PC-9 (cell line): ENCODE measurements at regions of chr3 and their contacts with region 1.

Region 1: GRCh38 chr3:192130534-192131132 is 596.7 kb downstream of the FGF12 start:
- DNase-seq: peak; percentile 39 to 53
- H3K4me3 ChIP-seq: no peak overlapping the region
- H3K27ac ChIP-seq: no peak overlapping the region
- H3K4me1 ChIP-seq: no peaks in the 10 kb centered on the region
- H3K27me3 ChIP-seq: no peaks in the 10 kb centered on the region
- CTCF ChIP-seq: peak; percentile 97

Region 2: GRCh38 chr3:191901741-191902140 is 228.9 kb before region 1 on chr3:
- CTCF ChIA-PET with region 1: interaction called, 13 read pairs
- POLR2A ChIA-PET with region 1: no interaction called
- intact Hi-C with region 1: no loop called
- DNase-seq: peak; percentile 50 to 68
- H3K4me3 ChIP-seq: no peak overlapping the region
- H3K27ac ChIP-seq: no peak overlapping the region
- H3K4me1 ChIP-seq: peaks cover 7% of the 10 kb centered on the region; the same call in 1 of the 2 replicates
- H3K27me3 ChIP-seq: no peaks in the 10 kb centered on the region
- CTCF ChIP-seq: no peak

Region 3: GRCh38 chr3:192082730-192083660 is 47.6 kb before region 1 on chr3:
- CTCF ChIA-PET with region 1: no interaction called
- POLR2A ChIA-PET with region 1: no interaction called
- intact Hi-C with region 1: no loop called
- DNase-seq: no peak
- H3K4me3 ChIP-seq: no peak overlapping the region
- H3K27ac ChIP-seq: no peak overlapping the region
- H3K4me1 ChIP-seq: peaks cover 12% of the 10 kb centered on the region; the same call in 1 of the 2 replicates
- H3K27me3 ChIP-seq: no peaks in the 10 kb centered on the region
- CTCF ChIP-seq: no peak